Sciatic nerve (tissue), 2 donors: ENCODE measurements at regions of chr16 and their contacts with region 1.

Region 1: DNA sequence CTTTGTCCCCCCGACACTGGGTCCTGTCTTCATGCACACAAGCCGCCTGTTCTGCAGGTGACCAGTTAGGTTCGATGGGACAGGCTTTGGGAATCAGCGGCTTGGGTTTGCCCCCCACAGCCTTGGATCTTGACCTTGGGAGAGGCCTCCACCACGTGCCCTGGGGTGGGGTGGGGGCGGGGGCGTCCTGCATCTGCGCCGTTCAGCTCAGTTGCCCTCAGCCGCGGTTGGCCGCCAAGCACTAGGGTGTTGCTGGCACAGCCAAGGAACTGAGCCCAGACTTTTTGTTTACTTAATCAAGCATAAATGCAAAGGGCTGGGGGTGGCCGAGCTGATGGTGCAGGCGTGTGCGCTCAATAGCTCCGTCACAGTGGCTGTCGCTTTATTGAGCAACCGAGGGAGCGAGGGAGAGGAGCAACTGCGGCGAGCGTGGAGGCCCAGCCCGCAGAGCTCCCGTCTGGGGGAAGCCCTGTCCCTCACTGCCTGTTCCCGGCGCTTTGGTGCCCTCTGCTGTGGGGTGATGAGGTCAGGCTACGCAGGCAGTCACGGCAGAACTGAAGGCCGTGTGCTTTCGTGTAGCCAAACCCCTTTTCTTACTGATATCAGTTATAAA is 33.9 kb downstream of the JPH3 start:
- DNase-seq: peak; percentile 90
- ATAC-seq: peak; percentile 97

Region 2: DNA sequence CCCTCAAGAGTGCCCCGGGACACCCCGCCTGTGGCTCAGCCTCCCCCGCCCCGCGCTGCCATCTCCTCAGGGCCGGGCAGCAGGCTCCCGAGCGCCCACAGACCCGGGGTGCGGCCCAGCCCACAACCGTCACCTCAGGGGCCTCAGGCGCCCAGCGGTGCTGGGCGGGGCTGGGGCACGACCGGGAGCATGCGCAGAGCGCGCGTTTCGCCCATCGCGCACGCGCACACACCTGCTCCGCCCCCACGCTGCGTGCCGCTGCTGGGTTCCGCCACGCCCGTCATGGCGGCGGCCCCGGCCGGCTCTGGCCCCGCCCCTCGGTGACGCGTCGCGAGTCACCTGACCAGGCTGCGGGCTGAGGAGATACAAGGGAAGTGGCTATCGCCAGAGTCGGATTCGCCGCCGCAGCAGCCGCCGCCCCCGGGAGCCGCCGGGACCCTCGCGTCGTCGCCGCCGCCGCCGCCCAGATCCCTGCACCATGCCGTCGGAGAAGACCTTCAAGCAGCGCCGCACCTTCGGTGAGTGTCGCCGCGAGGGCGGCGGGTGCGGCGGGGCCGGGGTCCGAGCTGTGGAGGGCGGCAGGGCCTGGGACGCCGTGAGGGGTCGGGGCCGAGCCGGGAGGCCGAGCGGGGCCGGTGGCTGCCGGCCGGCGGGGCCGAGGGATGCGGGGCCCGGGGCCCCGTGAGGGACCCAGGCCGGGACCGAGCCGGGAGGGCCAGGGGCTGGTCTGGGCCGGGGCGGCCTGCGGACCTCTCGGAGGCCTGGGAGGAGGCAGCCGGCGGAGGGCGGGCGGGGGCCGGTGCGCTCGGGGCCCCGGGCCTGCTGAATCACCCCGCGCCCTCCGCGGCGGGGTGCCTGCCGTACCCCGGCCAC is 244.0 kb before region 1 on chr16 and contains the start of gene MAP1LC3B:
- intact Hi-C with region 1: loop called (anchors 10 kb)
- DNase-seq: peak; percentile 98
- ATAC-seq: peak; percentile 92
- total RNA-seq, gene MAP1LC3B: 55.9 TPM

Region 3: GRCh38 chr16:87464691-87465300 is 171.4 kb before region 1 on chr16:
- intact Hi-C with region 1: no loop called
- DNase-seq: peak; percentile 86
- ATAC-seq: peak; percentile 95

Region 4: GRCh38 chr16:88022076-88023062 is 386.2 kb after region 1 on chr16:
- intact Hi-C with region 1: no loop called
- DNase-seq: no peak
- ATAC-seq: no peak